ENCODE measurements at regions of chr10 and their contacts with region 1.

Region 1: GRCh38 chr10:70879207-70879606 is 9.2 kb downstream of the PCBD1 start:
- DNase-seq: peak in 1 of 4 donors; percentile 57
- ATAC-seq: no peak
- H3K4me3 ChIP-seq: no peak overlapping the region
- H3K27ac ChIP-seq: peak overlapping the region in 1 of 4 donors; percentile 18
- H3K4me1 ChIP-seq: no peaks in the 10 kb centered on the region
- H3K27me3 ChIP-seq: no peaks in the 10 kb centered on the region
- CTCF ChIP-seq: no peak
- POLR2A ChIP-seq: no peak

Region 2: GRCh38 chr10:70815504-70816219 is 63.5 kb before region 1 on chr10 and contains the start of gene SGPL1:
- intact Hi-C with region 1: loop called (anchors 5 kb)
- DNase-seq: peak; percentile 86 to 92 (median 88)
- ATAC-seq: peak; percentile 90
- H3K4me3 ChIP-seq: peak within 1 kb of the TSS; percentile 42 to 52
- H3K27ac ChIP-seq: peak within 1 kb of the TSS; percentile 91 to 97 (median 94)
- H3K4me1 ChIP-seq: peaks cover 12% of the 10 kb centered on the region
- H3K27me3 ChIP-seq: no peaks in the 10 kb centered on the region
- CTCF ChIP-seq: peak; percentile 80 to 100 (median 97)
- POLR2A ChIP-seq: peak in 2 of 3 donors; percentile 63 to 67
- total RNA-seq, gene SGPL1: 36.3 to 43.8 TPM

Region 3: DNA sequence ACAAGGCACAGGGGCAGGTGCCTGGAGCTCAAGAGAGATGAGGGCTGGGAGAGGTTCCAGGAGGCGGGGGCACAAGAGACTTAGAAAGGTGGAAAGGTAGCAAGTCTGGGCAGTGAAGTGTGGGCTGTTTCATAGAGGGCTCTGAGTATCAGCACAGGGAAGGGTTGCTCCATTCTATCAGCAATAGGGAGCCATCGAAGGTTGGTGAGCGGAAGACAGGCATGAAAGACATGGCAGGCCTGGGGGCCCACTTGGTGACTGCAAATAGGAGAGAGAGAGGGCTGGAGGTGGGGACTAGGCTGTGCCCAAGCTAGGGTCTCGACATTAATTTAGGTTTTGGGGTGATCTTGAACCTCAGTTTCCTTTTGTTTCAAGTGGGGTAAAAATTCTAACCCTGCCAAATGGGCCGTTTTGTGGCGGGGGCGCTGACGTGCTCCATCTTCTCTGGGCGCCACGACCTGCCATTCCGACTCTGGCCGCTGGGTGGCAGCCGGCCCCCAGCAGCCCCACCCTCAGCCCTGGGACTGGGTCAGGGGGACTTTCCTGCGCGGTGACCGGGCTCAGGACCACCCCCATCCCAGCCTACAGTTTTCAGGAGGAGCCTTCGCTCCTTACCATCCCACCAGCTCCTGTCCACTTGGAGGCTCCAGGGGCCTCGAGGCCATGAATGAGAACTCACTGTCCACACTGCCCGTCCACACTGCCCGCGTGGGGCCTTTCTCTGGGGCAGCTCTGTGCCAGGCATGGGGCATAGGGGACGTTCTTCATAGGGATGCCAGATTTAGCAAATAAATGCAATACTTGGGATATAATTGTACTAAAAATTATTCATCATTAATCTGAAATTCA is 46.4 kb after region 1 on chr10:
- intact Hi-C with region 1: no loop called
- DNase-seq: peak; percentile 23 to 64 (median 43)
- ATAC-seq: peak; percentile 74
- H3K4me3 ChIP-seq: no peak overlapping the region
- H3K27ac ChIP-seq: no peak overlapping the region
- H3K4me1 ChIP-seq: no peaks in the 10 kb centered on the region
- H3K27me3 ChIP-seq: no peaks in the 10 kb centered on the region
- CTCF ChIP-seq: peak; percentile 75 to 91 (median 85)
- POLR2A ChIP-seq: no peak

Region 4: GRCh38 chr10:71383972-71384687 is 504.9 kb after region 1 on chr10:
- intact Hi-C with region 1: no loop called
- DNase-seq: peak; percentile 63 to 81 (median 69)
- ATAC-seq: peak; percentile 89
- H3K4me3 ChIP-seq: no peak overlapping the region
- H3K27ac ChIP-seq: no peak overlapping the region
- H3K4me1 ChIP-seq: no peaks in the 10 kb centered on the region
- H3K27me3 ChIP-seq: no peaks in the 10 kb centered on the region
- CTCF ChIP-seq: peak; percentile 72 to 94 (median 82)
- POLR2A ChIP-seq: no peak